Ascending aorta (tissue), 2 donors: ENCODE measurements at regions of chr10 and their contacts with region 1.

Region 1: DNA sequence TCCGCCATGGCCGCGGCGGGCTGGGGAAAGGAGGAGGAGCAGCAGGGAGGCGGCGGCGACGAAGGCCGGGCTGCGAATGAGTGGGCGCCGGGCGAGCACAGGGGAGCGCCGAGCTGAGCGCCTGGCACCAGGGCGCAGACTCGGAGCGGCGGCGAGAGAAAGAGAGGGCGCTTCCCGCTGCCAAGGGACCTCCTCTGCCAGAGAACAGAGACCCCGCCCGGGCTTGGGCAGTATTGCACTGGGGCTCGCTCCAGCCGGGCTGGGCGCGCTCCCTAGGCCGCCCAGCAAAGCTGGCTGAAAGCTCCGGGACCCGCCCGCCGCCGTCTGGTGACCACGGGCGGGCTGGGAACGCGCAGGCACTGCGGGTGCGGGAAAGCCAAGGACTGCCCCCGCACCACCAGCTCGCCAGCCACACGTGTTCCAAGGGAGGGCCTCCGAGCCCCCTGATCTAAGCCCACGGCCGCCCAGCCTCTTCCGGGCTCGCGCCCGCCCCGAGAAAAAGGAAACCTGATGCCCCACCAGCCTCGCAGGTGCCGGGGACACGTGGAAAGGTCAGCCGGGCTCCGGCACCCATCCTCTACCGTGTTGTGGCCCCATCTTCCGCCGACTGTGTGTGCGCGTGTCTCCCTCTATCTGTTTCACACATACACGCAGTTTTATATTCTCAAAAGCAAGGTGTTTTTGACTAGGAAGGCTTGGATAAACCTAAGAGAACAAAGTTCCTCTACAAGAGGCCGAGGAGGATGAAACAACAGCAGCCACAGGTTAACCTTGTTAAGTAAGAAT is at the start of gene CCDC6:
- DNase-seq: peak; percentile 68 to 96
- H3K4me3 ChIP-seq: peak within 1 kb of the TSS; percentile 80 to 87
- H3K27ac ChIP-seq: peak within 1 kb of the TSS; percentile 90 to 95
- H3K4me1 ChIP-seq: peaks cover 0 to 12% of the 10 kb centered on the region in 2 donors
- H3K27me3 ChIP-seq: no peaks in the 10 kb centered on the region
- CTCF ChIP-seq: peak; percentile 77 to 97 (median 91)
- total RNA-seq, gene CCDC6: 21.1 TPM

Region 2: DNA sequence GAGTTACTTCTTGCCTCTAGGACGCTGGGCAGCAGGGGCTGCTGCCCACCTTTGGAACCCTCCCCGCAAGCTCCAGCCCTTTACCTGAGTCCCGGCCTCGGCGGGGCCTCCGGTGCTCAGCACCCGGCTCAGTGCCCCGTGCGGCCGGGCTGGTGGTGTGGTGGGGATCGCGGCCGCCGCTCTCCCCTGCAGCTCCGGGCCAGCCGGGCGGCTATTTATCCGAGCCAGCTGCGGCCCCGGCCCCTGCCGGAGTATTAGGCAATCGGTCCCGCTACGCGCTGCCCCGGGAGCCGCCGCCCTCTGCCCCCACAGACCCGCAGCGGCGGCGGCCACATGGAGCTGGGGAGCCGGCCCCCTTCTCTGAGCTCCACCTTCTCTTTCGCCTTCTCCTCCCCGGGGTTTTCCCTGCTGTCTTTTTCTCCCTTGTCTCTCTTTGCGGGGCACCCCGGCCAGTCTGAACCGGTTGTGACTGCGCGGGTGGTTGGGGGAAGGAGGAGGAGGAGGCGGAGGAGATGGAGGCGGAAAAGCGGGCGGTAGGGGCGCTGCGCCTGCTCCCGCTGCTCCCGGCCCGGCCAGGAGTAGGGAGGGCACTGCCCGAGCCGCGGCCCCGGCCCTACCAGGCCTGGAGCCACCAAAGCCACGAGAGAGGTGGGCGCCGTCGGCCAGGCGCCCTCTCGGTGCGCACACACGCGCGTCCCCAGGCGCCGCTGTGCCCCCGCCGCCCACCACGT is 197.1 kb before region 1 on chr10 and contains the start of gene SLC16A9:
- intact Hi-C with region 1: loop called (anchors 5 kb)
- DNase-seq: peak in 1 of 2 donors; percentile 75
- H3K4me3 ChIP-seq: peak within 1 kb of the TSS; percentile 75 to 84
- H3K27ac ChIP-seq: peak within 1 kb of the TSS; percentile 83 to 85
- H3K4me1 ChIP-seq: peaks cover 4 to 17% of the 10 kb centered on the region in 2 donors
- H3K27me3 ChIP-seq: no peaks in the 10 kb centered on the region
- CTCF ChIP-seq: peak in 2 of 3 experiments; percentile 40 to 50
- total RNA-seq, gene SLC16A9: 2.9 TPM

Region 3: DNA sequence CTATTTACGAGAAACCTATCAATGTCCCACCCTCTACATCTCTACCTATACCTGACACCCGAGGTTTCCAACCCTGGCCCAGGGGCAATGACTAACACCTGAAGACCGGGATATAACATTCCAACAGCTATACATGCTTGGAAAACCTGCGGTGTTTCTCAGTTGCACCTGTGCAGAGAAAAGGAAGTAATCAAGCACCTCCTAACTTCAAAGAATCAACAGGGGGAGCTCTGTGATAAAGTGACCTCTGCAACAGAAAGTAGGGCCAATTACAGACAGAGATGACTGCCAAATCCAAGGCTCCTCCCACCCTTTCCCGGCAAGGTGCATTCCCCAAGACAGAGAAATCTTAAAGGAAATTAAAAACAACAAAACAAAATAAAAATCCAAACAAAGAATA is 41.5 kb before region 1 on chr10:
- intact Hi-C with region 1: loop called (anchors 2 kb)
- DNase-seq: no peak
- H3K4me3 ChIP-seq: peak overlapping the region in 1 of 2 donors; percentile 26
- H3K27ac ChIP-seq: peak overlapping the region; percentile 46 to 59
- H3K4me1 ChIP-seq: peaks cover 5 to 13% of the 10 kb centered on the region in 2 donors
- H3K27me3 ChIP-seq: no peaks in the 10 kb centered on the region
- CTCF ChIP-seq: peak; percentile 7 to 49 (median 35)

Region 4: GRCh38 chr10:60041489-60042133 is 135.0 kb after region 1 on chr10:
- intact Hi-C with region 1: loop called (anchors 2 kb)
- DNase-seq: no peak
- H3K4me3 ChIP-seq: no peak overlapping the region
- H3K27ac ChIP-seq: peak overlapping the region; percentile 46 to 66
- H3K4me1 ChIP-seq: peaks cover 7 to 19% of the 10 kb centered on the region in 2 donors
- H3K27me3 ChIP-seq: no peaks in the 10 kb centered on the region
- CTCF ChIP-seq: no peak

Region 5: GRCh38 chr10:60140651-60141632 is 234.3 kb after region 1 on chr10:
- intact Hi-C with region 1: no loop called
- DNase-seq: no peak
- H3K4me3 ChIP-seq: no peak overlapping the region
- H3K27ac ChIP-seq: peak overlapping the region in 1 of 2 donors; percentile 21
- H3K4me1 ChIP-seq: no peaks in the 10 kb centered on the region
- H3K27me3 ChIP-seq: no peaks in the 10 kb centered on the region
- CTCF ChIP-seq: no peak